ENCODE measurements at regions of chr16 and their contacts with region 1.

Region 1: DNA sequence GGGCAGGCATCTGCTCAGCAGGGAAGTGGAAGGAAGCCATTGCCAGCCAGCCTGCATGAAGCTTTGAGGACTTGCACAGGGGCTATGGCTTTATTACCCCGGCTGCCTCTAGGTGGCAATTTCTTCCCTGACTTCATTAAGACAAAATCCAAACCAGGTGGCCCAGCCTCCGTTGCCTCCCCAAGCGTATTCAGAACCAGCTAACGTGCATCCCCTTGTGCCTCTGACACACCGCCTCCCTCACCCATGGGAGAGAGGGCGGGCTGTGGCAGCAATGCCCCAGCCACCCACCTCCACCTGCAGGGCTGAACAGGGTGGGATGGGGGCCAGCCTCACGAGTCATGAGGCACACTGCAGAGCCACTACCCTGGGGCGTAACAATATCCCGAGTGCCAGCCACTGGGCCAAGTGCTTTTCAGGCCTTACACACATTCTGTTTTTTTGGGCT is 6.8 kb downstream of the KIFC3 start:
- DNase-seq: peak; percentile 79 to 89
- ATAC-seq: peak; percentile 33 to 51; a peak in 5 of 6 replicates
- H3K4me3 ChIP-seq: peak overlapping the region; percentile 53
- H3K27ac ChIP-seq: peak overlapping the region; percentile 91 to 100
- H3K4me1 ChIP-seq: peaks cover 55% of the 10 kb centered on the region
- CTCF ChIP-seq: peak; percentile 51
- EP300 ChIP-seq: no peak
- POLR2A ChIP-seq: no peak
- RAD21 ChIP-seq: peak; percentile 57 to 62

Region 2: DNA sequence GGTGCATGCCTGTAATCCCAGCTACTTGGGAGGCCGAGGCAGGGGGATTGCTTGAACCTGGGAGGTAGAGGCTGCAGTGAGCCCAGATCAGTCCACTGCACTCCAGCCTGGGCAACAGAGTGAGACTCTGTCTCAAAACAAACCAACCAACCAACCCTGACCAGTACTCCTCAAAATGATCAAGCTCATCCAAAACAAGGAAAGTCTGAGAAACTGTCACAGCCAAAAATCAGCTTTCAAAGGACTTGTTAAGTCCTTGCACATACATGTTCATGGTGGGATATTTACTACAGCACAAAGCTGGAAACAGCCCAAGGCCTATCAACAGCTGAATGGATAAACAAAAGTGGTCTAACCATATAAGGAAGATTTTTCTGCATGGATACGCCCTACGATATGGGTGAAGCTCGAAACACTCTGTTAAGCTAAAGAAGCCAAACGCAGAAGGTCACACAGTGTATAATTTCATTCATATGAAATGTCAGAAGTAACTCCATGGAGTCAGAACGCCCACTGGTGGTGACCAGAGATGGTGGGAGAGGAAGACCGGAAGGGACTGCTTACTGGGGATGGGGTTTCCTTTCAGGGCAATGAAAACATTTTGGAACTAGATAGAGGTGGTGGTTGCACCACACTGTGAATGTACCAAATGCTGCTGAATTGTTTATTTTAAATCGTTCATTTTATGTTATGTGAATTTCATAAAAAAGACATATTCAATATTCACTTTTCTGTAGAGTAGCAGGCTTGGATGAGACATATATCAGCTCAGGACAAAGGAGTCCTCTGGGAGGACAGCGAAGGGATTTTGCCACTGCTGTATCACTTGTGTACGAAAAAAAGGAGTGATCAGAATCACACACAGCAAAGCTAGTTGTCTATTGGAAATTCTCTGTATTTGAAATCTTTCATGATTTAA is 373.2 kb before region 1 on chr16:
- CTCF ChIA-PET with region 1: no interaction called
- POLR2A ChIA-PET with region 1: no interaction called
- DNase-seq: peak; percentile 55 to 72
- ATAC-seq: peak; percentile 67 to 73
- H3K4me3 ChIP-seq: no peak overlapping the region
- H3K27ac ChIP-seq: peak overlapping the region in 1 of 2 experiments; percentile 47; a peak in 3 of 6 replicates
- H3K4me1 ChIP-seq: peaks cover 31% of the 10 kb centered on the region
- CTCF ChIP-seq: peak; percentile 75
- EP300 ChIP-seq: no peak
- POLR2A ChIP-seq: no peak
- RAD21 ChIP-seq: peak; percentile 82 to 86

Region 3: GRCh38 chr16:57564571-57565270 is 230.7 kb before region 1 on chr16:
- CTCF ChIA-PET with region 1: no interaction called
- POLR2A ChIA-PET with region 1: no interaction called
- DNase-seq: no peak
- ATAC-seq: peak; percentile 3 to 28; a peak in 2 of 6 replicates
- H3K4me3 ChIP-seq: no peak overlapping the region
- H3K27ac ChIP-seq: peak overlapping the region in 1 of 2 experiments; percentile 48; a peak in 2 of 6 replicates
- H3K4me1 ChIP-seq: 0 out of 3 replicates have a peak, but pooled peaks cover 5% of the 10 kb centered on the region
- CTCF ChIP-seq: no peak
- EP300 ChIP-seq: no peak
- POLR2A ChIP-seq: no peak
- RAD21 ChIP-seq: no peak

Region 4: GRCh38 chr16:57700781-57701551 is 94.5 kb before region 1 on chr16:
- CTCF ChIA-PET with region 1: no interaction called
- POLR2A ChIA-PET with region 1: no interaction called
- DNase-seq: no peak
- ATAC-seq: no peak
- H3K4me3 ChIP-seq: no peak overlapping the region
- H3K27ac ChIP-seq: no peak overlapping the region
- H3K4me1 ChIP-seq: peaks cover 13% of the 10 kb centered on the region
- CTCF ChIP-seq: no peak
- EP300 ChIP-seq: no peak
- POLR2A ChIP-seq: no peak
- RAD21 ChIP-seq: no peak

Region 5: DNA sequence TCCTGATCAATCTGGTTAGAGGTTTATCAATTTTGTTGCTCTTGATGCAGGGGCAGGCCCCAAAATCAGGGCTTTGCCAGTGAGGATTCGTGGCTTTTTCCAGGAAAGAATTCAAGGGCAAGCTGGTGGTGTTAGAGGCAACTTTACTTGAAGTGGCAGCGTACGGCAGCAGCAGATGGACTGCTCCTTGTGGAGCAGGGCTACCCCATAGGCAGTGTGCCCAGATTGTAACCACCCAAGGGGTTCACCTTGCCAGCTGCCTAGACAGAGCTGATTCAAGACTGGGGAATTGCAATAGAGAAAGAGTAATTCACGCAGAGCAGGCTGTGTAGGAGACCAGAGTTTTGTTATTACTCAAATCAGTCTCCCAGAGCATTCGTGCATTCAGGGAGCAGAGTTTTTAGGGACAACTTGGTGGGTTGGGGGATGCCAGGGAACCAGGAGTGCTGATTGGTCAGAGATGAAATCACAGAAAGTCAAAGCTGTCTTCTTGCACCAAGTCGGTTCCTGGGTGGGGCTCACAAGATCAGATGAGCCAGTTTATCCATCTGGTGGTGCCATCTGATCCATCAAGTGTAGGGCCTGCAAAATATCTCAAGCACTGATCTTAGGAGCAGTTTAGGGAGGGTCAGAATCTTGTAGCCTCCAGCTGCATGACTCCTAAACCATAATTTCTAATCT is 84.0 kb before region 1 on chr16:
- CTCF ChIA-PET with region 1: no interaction called
- POLR2A ChIA-PET with region 1: no interaction called
- DNase-seq: no peak
- ATAC-seq: no peak
- H3K4me3 ChIP-seq: no peak overlapping the region
- H3K27ac ChIP-seq: no peak overlapping the region
- H3K4me1 ChIP-seq: no peaks in the 10 kb centered on the region
- CTCF ChIP-seq: no peak
- EP300 ChIP-seq: no peak
- POLR2A ChIP-seq: no peak
- RAD21 ChIP-seq: no peak

Region 6: GRCh38 chr16:57775661-57776469 is 19.6 kb before region 1 on chr16:
- CTCF ChIA-PET with region 1: interaction called, 40 read pairs
- POLR2A ChIA-PET with region 1: no interaction called
- DNase-seq: peak in 1 of 2 experiments; percentile 60
- ATAC-seq: peak; percentile 21 to 74; a peak in 4 of 6 replicates
- H3K4me3 ChIP-seq: no peak overlapping the region
- H3K27ac ChIP-seq: peak overlapping the region in 1 of 2 experiments; percentile 75; a peak in 3 of 6 replicates
- H3K4me1 ChIP-seq: peaks cover 56% of the 10 kb centered on the region
- CTCF ChIP-seq: no peak
- EP300 ChIP-seq: no peak
- POLR2A ChIP-seq: no peak
- RAD21 ChIP-seq: peak in 1 of 2 experiments; percentile 41; a peak in 1 of 5 replicates

Region 7: GRCh38 chr16:57781741-57782606 is 13.5 kb before region 1 on chr16:
- CTCF ChIA-PET with region 1: interaction called, 40 read pairs
- POLR2A ChIA-PET with region 1: interaction called, 6 read pairs
- DNase-seq: no peak
- ATAC-seq: 0 out of 6 replicates have a peak, but pooled peaks have one; percentile 4 to 17
- H3K4me3 ChIP-seq: no peak overlapping the region
- H3K27ac ChIP-seq: peak overlapping the region; percentile 40 to 76; a peak in 4 of 6 replicates
- H3K4me1 ChIP-seq: peaks cover 76% of the 10 kb centered on the region
- CTCF ChIP-seq: no peak
- EP300 ChIP-seq: no peak
- POLR2A ChIP-seq: no peak
- RAD21 ChIP-seq: no peak

Region 8: DNA sequence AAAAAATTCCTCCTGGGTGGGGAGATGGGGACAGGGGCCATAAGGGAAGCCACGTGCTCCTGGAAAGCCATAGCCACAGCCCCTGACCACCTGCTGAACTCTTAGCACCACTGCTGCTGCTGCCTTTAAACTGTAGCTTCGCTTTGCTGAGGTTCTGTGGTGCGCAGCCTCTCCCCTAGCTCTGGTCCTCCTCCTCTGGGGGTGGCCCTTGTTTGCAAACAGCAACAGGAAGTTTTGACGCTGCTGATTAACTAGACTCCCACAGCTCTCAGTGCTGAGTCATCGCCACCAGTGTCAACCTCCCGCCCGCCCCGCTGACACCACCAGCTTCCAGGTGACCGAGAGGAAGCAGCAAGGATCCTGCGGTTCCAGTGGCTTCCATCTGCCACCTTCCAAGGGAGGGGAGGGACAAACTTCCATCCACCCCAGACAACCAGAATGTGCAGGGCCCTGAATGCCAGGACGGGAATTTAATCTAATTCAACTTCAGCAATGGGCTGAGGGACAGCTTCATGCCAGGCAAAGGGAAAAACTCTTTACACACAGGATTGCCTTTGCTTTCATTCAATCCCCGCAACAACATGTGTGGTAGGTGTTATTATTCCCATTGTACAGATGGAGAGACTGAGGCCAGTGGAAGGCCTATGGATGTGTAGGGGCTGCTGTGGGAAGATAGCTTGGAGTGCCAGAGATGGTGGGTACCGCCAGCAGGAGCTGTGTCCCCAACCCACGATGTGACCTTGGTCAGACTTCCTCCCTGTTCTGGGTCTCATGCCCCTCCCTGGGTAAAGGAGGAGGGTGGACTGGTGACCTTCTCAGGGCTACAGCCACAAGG is 15.0 kb after region 1 on chr16:
- CTCF ChIA-PET with region 1: interaction called, 20 read pairs
- POLR2A ChIA-PET with region 1: interaction called, 43 read pairs
- DNase-seq: peak; percentile 94 to 98
- ATAC-seq: peak; percentile 71 to 81
- H3K4me3 ChIP-seq: peak overlapping the region; percentile 4; the same call in 1 of the 3 replicates
- H3K27ac ChIP-seq: peak overlapping the region; percentile 91 to 97
- H3K4me1 ChIP-seq: peaks cover 84% of the 10 kb centered on the region
- CTCF ChIP-seq: no peak
- EP300 ChIP-seq: peak; percentile 90 to 91
- POLR2A ChIP-seq: peak; percentile 56
- RAD21 ChIP-seq: peak; percentile 3 to 51; a peak in 3 of 5 replicates